H1 (cell line): ENCODE measurements at regions of chr15 and their contacts with region 1.

Region 1: DNA sequence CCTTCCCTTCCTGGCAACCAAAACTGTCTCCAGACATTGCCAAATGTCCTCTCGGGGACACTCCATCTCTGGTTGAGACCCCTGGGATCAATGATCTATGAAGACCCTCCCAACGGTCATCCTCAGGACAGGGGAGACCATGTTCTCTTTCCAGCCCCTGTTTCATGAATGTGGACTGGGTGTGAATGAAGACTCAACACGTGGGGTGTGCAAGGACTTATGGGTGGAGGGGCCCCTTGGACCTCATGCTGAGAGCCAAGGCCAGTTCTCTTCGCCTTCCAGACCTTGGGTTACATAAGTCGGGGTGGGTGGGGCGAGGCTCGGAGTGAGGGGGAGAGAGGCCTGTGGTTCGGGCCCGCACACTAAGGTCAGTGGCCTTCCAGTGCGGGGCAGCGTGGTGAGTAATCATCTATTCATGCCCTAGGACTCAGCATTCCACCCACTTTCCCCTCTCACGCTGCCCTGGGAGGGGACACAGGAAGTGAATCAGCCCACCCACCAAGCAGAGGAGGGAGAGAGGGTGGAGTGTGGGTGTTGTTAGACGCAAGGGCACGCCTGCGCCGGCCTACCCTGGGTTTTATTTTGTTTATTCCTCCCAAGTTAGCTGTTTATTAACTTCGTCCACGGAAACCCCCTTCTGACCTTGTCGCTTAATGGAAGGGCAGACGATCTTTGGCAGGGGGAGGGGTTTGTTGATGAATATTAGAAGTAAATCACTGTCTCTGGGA is 6.7 kb downstream of the PAQR5 start:
- DNase-seq: peak in 1 of 2 experiments; percentile 21
- H3K4me3 ChIP-seq: no peak overlapping the region
- H3K27ac ChIP-seq: no peak overlapping the region
- H3K4me1 ChIP-seq: peaks cover 0 to 9% (median 4%) of the 10 kb centered on the region in 4 experiments
- H3K27me3 ChIP-seq: peaks cover 0 to 3% (median 1%) of the 10 kb centered on the region in 4 experiments; a peak in 2 of 7 replicates
- CTCF ChIP-seq: no peak
- EP300 ChIP-seq: no peak
- POLR2A ChIP-seq: no peak
- RAD21 ChIP-seq: no peak

Region 2: DNA sequence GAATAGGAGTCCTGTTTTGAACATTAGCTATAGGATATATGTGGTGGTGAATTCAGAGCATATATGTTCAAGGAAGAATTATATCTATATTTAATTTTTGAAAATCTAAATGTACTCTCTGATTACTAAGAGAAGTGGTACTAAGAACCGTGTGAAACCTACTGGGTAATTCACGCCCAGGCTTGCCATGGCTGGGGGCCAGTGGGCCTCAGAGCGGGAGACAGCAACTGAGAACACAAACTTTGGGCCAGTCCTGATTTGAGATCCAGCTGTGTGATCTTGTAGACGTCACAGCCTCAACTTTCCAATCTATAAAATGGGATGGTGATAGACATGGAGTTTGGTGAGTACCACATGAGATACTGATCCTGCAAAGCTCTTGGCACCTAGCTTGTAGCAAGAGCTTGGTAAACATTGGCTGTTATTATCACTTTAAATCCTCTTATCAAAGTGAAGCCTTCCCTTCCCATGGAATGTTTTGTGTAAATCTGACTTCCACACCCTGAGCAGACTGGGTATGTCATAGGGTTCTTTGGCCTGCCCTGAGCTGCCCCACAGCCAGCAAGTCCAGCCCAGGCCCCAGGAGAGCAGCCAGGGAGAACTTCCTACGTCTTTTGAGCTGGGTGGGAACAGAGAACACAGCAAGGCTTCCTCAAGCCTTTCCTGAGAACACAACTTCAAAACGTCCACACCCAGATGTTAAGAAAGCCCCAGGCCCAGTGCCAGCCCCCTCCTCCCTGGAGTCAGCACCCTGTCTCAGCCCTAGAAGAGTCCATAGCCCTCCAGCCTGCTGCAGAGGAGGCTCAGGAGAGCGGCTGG is 14.8 kb before region 1 on chr15:
- CTCF ChIA-PET with region 1: interaction called, 26 read pairs
- POLR2A ChIA-PET with region 1: interaction called, 10 read pairs
- DNase-seq: no peak
- H3K4me3 ChIP-seq: no peak overlapping the region
- H3K27ac ChIP-seq: no peak overlapping the region
- H3K4me1 ChIP-seq: 0 out of 7 replicates have a peak, but pooled peaks cover 0 to 2% (median 0%) of the 10 kb centered on the region in 4 experiments
- H3K27me3 ChIP-seq: no peaks in the 10 kb centered on the region; a peak in 2 of 7 replicates
- CTCF ChIP-seq: no peak
- EP300 ChIP-seq: no peak
- POLR2A ChIP-seq: no peak
- RAD21 ChIP-seq: no peak

Region 3: GRCh38 chr15:69320977-69321554 is 15.7 kb after region 1 on chr15:
- CTCF ChIA-PET with region 1: interaction called, 24 read pairs
- POLR2A ChIA-PET with region 1: interaction called, 3 read pairs
- DNase-seq: no peak
- H3K4me3 ChIP-seq: no peak overlapping the region
- H3K27ac ChIP-seq: no peak overlapping the region
- H3K4me1 ChIP-seq: peaks cover 0 to 5% (median 2%) of the 10 kb centered on the region in 4 experiments; a peak in 5 of 7 replicates
- H3K27me3 ChIP-seq: no peaks in the 10 kb centered on the region
- CTCF ChIP-seq: no peak
- EP300 ChIP-seq: no peak
- POLR2A ChIP-seq: no peak
- RAD21 ChIP-seq: no peak

Region 4: DNA sequence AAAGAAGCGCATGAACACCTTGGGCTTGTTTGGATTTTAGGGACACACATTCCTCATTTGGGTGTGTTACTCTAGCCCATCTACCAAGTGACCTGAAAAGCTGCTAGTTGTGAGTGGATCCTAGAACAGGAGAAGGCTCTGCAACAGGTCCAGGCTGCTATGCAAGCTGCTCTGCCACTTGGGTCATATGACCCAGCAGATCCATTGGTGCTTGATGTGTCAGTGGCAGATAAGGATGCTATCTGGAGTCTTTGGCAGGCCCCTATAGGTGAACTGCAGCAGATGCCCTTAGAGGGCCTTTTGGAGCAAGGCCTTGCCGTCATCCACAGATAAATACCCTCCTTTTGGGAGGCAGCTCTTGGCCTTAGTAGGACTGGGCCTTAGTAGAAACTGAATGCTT is 46.5 kb after region 1 on chr15:
- CTCF ChIA-PET with region 1: no interaction called
- POLR2A ChIA-PET with region 1: no interaction called
- DNase-seq: no peak
- H3K4me3 ChIP-seq: no peak overlapping the region
- H3K27ac ChIP-seq: no peak overlapping the region
- H3K4me1 ChIP-seq: no peaks in the 10 kb centered on the region
- H3K27me3 ChIP-seq: no peaks in the 10 kb centered on the region
- CTCF ChIP-seq: no peak
- EP300 ChIP-seq: no peak
- POLR2A ChIP-seq: no peak
- RAD21 ChIP-seq: no peak

Region 5: DNA sequence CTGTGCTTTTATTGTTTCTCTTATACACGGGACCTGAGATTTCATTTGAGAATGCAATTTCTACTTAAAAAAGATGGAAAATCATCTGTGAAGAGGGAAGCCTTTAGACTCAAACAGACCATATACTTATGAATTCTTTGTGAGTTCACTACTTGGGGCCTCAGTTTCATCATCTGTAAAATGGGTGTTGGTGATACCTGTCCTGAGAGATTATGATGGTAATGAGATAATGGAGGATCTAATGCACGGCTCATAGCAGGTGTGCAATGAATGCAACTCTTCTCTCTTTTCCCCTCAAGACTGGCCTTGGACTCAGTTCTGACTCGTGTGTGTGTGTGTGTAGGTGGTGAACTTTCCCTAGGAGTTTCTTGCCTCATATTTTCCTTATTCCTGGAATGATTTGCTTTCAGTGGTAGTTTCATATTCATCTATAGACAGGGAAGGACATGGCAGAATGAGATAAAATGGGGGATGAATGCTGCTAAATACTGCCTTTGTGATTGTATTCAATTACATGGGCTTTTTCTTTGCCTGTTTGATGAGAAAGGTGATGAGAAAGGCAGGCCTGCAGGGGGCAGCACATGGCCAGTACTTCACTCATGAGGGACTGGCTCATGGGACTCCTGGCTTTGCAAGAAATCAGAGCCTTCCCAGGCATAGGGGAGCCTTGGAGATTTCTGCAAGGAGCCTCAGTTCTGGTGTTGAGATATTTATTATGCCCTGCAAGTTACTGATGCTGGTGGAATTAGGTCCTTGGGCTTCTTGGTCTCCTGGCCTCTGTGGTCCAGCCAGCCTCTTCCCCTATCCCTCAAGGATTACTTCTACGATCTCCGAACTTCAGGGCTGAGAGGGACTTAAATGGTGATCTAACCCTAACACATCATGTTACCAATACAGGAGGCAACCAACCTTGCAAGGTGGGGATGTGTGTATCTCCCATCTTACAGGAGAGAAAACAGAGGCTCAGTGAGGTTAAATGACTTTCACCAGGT is 217.9 kb after region 1 on chr15:
- CTCF ChIA-PET with region 1: no interaction called
- POLR2A ChIA-PET with region 1: no interaction called
- DNase-seq: peak; percentile 33 to 92
- H3K4me3 ChIP-seq: no peak overlapping the region
- H3K27ac ChIP-seq: no peak overlapping the region
- H3K4me1 ChIP-seq: peaks cover 0 to 10% (median 3%) of the 10 kb centered on the region in 4 experiments; a peak in 3 of 7 replicates
- H3K27me3 ChIP-seq: no peaks in the 10 kb centered on the region
- CTCF ChIP-seq: peak; percentile 67 to 88 (median 83)
- EP300 ChIP-seq: no peak
- POLR2A ChIP-seq: no peak
- RAD21 ChIP-seq: peak; percentile 84 to 93